Colonic mucosa (tissue), 4 donors: ENCODE measurements at regions of chr17 and their contacts with region 1.

Region 1: DNA sequence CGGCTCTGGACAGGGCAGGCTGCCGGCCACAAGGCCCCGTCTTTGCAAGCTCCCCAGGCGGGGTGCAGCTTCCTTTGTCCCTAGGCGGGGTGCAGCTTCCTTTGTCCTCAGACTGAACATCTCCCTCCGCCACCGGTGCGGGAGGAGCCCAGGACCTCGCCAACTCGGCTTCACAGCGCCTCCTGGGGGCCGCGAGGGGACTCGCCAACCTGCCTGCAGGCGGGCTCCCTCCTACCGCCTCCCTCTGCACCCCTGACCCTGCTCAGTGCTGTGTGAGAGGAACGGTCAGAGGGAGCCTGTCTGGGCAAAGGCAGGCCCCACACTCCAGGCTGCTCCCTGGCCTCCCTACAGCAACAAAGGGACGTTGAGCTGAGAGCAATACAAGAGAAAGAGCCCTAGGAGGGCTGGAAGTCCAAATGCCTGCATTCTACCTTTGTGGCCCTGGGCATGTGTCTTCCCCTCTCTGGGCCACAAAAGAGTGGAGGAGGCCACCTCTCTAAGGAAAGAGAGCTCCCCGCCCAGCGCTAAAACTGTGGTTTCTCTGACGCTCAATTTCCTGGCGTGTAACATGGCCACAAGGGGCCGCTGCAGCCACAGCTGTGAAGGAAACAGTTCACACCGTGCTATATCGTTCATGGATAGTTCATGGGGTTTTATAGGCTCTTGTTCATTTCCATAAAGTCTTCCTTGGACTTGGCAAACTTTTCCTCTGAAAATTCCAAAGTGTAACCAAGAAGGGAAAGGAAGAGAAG is 20.9 kb upstream of the KRT19 start:
- DNase-seq: peak; percentile 93
- H3K4me3 ChIP-seq: no peak overlapping the region
- H3K27ac ChIP-seq: peak overlapping the region; percentile 87
- H3K4me1 ChIP-seq: peaks cover 23% of the 10 kb centered on the region
- H3K27me3 ChIP-seq: no peaks in the 10 kb centered on the region
- CTCF ChIP-seq: peak; percentile 93

Region 2: GRCh38 chr17:41486809-41487720 is 62.0 kb before region 1 on chr17:
- intact Hi-C with region 1: loop called (anchors 5 kb)
- DNase-seq: peak; percentile 74
- H3K4me3 ChIP-seq: no peak overlapping the region
- H3K27ac ChIP-seq: no peak overlapping the region
- H3K4me1 ChIP-seq: peaks cover 5% of the 10 kb centered on the region
- H3K27me3 ChIP-seq: no peaks in the 10 kb centered on the region
- CTCF ChIP-seq: peak; percentile 58

Region 3: GRCh38 chr17:41510251-41511065 is 38.6 kb before region 1 on chr17:
- intact Hi-C with region 1: no loop called
- DNase-seq: no peak
- H3K4me3 ChIP-seq: no peak overlapping the region
- H3K27ac ChIP-seq: peak overlapping the region; percentile 46
- H3K4me1 ChIP-seq: no peaks in the 10 kb centered on the region
- H3K27me3 ChIP-seq: no peaks in the 10 kb centered on the region
- CTCF ChIP-seq: no peak